ENCODE measurements at regions of chr6 and their contacts with region 1.

Region 1: DNA sequence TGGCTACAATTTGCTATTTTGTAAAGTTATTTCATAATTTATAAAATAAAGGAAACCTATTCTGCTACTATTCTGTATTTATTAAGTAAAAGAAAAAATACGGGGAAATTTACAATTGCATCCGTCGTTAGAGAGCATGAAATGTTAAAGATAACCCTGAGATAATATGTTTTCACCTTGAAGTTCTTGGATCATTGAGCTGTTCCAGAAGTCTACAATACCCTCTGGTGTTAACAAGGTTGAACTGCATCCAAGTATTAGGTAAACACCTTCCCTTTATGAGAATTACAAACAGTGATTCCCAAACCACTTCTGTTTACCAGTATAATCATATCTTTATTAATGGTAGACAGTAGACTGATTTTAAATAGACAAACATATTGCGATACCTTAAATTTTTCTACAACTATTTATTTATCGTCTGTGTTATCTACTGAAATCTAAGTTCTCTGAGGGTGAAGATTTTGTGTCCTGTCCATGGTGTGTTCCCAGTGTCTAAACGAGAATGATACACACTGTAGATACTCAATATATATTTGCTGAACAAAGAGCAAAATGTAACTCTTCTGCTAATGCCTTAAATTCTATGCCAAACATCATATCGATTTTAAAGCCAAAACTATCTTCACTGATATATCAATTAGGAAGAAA is 28.2 kb downstream of the TBC1D32 start:
- DNase-seq: peak in 4 of 5 donors; percentile 3 to 14 (median 9)
- H3K4me3 ChIP-seq: no peak overlapping the region
- H3K4me3 Mint-ChIP-seq: no peak overlapping the region
- H3K27ac ChIP-seq: no peak overlapping the region
- H3K27ac Mint-ChIP-seq: no peak overlapping the region
- H3K4me1 ChIP-seq: no peaks in the 10 kb centered on the region
- H3K4me1 Mint-ChIP-seq: peaks cover 0 to 1% (median 0%) of the 10 kb centered on the region in 4 donors
- H3K27me3 ChIP-seq: no peaks in the 10 kb centered on the region
- H3K27me3 Mint-ChIP-seq: no peaks in the 10 kb centered on the region

Region 2: GRCh38 chr6:119742188-119742803 is 1563.8 kb before region 1 on chr6:
- CTCF ChIA-PET with region 1: no interaction called
- POLR2A ChIA-PET with region 1: no interaction called
- intact Hi-C with region 1: loop called (anchors 5 kb)
- DNase-seq: peak; percentile 11 to 38 (median 30)
- H3K4me3 ChIP-seq: no peak overlapping the region
- H3K4me3 Mint-ChIP-seq: peak overlapping the region in 2 of 8 donors; percentile 18 to 19
- H3K27ac ChIP-seq: no peak overlapping the region
- H3K27ac Mint-ChIP-seq: no peak overlapping the region
- H3K4me1 ChIP-seq: no peaks in the 10 kb centered on the region
- H3K4me1 Mint-ChIP-seq: peaks cover 0 to 7% (median 3%) of the 10 kb centered on the region in 4 donors
- H3K27me3 ChIP-seq: no peaks in the 10 kb centered on the region
- H3K27me3 Mint-ChIP-seq: no peaks in the 10 kb centered on the region

Measured in CD4-positive, alpha-beta memory T cell (primary cell).